ENCODE measurements at regions of chr19 and their contacts with region 1.

Region 1: DNA sequence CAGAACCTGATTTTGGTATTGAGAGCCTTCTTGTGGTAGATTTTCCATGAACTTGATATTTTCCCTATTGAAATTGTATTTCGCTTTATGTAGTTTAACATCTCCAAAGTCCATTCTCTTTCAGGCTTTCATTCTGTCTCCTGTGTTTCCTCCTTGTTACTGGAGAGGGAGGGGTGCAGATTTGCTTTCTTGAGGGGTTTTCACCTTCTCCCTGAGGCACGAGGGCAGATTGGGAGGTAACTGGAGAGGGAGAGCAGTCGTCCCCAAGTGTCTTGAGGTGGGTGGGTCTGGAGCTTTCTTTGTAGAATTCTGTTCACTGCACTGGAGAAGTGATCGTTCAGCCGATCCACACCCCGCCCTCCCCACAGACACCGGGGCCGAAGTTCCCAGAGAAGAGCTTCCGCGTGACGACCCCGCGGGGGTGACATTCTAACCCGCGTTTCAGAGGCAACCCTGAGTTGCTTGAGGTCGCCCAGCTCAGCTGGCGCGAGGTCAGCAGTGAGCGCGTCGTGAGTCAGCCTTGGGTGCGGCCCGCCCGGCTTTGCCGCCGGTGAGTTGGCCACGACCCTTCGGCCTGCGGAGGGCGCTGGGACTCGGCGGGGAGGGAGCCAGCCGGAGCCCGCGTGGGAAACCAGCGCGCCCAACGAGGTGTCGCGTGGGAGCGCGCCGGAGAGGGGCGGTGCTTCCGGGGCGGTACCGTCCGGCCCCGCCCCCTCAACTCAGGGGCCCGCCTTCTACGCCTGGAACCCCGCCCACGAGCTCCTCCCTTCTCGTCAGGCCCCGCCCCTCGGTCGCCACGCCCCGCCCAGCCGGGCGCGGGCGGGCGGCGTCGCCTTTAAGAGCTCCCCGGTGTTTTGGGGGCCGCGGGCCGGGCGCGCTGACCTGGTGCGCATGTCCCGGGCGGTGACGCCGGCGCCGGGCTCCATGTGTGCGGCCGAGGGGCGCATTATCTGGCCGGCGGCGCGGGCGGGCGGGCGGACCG is at the start of gene GATAD2A:
- DNase-seq: peak; percentile 95 to 98
- ATAC-seq: peak; percentile 91 to 94 (median 92)
- H3K4me3 ChIP-seq: peak within 1 kb of the TSS; percentile 96
- H3K27ac ChIP-seq: peak within 1 kb of the TSS; percentile 93
- H3K4me1 ChIP-seq: peaks cover 55% of the 10 kb centered on the region
- H3K27me3 ChIP-seq: no peaks in the 10 kb centered on the region
- CTCF ChIP-seq: peak; percentile 32
- total RNA-seq, gene GATAD2A: 25.3 to 65.9 (median 55.6) TPM

Region 2: DNA sequence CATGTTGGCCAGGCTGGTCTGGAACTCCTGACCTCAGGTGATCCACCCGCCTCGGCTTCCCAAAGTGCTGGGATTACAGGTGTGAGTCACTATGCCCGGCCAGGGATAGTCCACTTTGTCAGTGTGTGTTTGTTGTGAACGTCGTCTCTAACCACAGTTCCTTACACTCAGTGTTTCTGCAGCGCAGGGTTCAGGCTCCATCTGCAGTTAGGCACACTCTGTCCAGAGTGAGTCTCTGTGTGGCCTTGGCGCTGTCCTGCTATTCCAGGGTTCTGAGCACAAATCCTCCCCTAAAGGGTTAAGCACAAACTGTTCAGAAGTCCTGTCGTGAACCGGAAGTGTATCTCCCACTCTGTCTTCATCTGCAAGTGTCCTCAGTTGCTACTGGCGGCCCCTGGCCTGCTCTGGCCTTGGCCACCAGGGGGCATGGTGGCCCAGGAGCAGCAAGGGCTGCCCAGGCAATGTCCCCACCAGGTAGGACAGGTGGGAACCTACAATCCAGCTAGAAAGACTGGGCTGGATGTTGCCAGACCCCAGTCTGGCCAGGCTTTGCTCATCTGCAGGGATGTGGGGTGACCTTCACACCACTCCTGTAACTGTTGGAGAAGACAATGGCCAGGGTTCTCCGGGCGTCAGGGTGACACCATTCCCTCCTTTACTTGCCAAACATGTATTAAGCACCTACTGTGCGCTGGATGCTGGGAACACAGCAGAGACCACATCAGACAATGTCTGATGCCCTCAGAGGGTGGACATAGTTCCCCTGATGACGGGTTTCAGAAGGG is 38.4 kb before region 1 on chr19:
- intact Hi-C with region 1: loop called in 1 of 2 experiments (anchors 5 kb)
- DNase-seq: peak; percentile 69 to 82
- ATAC-seq: peak; percentile 87 to 93 (median 90)
- H3K4me3 ChIP-seq: no peak overlapping the region
- H3K27ac ChIP-seq: no peak overlapping the region
- H3K4me1 ChIP-seq: peaks cover 6% of the 10 kb centered on the region
- H3K27me3 ChIP-seq: no peaks in the 10 kb centered on the region
- CTCF ChIP-seq: peak; percentile 95

Region 3: GRCh38 chr19:19459707-19460251 is 54.6 kb after region 1 on chr19:
- intact Hi-C with region 1: loop called in 1 of 2 experiments (anchors 2 kb)
- DNase-seq: peak in 1 of 2 donors; percentile 50
- ATAC-seq: no peak
- H3K4me3 ChIP-seq: peak overlapping the region; percentile 41
- H3K27ac ChIP-seq: peak overlapping the region; percentile 81
- H3K4me1 ChIP-seq: peaks cover 80% of the 10 kb centered on the region
- H3K27me3 ChIP-seq: no peaks in the 10 kb centered on the region
- CTCF ChIP-seq: no peak